ENCODE measurements at regions of chr1 and their contacts with region 1.

Region 1: DNA sequence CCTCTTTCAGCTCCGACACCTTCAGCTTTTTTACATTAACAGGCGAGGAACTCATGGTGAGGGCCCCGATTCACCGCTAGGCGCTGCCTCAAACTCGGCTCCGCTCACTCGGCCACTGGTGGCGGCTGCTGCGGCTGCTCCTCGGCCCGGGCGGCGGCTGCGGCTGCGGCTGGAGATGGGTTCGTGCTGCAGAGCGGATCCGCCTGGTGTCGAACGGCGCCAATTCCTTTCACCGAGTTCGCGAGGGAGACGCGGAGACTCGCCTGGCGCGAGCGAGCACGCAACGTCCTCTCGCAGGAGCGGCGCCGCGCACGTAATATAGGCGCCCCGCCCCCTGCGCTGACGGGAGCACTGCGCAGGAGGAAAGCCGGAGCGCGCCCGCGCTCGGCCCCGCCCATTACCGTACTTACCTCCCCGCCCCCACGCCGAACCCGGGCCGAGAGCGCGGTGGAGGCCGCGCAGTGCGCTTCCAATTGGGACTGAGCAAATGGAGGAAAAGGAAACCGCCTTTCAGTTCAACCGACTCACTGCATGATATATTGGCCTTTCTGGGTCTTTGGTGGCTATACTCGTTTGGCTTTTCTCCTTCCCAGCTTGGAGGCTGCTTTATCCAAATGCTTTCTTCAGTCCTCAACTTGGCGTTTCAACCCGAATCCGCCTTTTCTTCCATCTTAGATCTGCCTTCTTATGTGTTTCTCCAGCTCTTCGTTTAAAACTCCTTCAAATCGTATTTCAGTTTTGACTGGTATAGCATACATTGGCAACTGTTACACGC is at the start of gene HNRNPU:
- H3K4me3 ChIP-seq: peak within 1 kb of the TSS; percentile 80
- H3K27ac ChIP-seq: peak within 1 kb of the TSS; percentile 100
- H3K4me1 ChIP-seq: peaks cover 16% of the 10 kb centered on the region
- CTCF ChIP-seq: peak; percentile 61

Region 2: DNA sequence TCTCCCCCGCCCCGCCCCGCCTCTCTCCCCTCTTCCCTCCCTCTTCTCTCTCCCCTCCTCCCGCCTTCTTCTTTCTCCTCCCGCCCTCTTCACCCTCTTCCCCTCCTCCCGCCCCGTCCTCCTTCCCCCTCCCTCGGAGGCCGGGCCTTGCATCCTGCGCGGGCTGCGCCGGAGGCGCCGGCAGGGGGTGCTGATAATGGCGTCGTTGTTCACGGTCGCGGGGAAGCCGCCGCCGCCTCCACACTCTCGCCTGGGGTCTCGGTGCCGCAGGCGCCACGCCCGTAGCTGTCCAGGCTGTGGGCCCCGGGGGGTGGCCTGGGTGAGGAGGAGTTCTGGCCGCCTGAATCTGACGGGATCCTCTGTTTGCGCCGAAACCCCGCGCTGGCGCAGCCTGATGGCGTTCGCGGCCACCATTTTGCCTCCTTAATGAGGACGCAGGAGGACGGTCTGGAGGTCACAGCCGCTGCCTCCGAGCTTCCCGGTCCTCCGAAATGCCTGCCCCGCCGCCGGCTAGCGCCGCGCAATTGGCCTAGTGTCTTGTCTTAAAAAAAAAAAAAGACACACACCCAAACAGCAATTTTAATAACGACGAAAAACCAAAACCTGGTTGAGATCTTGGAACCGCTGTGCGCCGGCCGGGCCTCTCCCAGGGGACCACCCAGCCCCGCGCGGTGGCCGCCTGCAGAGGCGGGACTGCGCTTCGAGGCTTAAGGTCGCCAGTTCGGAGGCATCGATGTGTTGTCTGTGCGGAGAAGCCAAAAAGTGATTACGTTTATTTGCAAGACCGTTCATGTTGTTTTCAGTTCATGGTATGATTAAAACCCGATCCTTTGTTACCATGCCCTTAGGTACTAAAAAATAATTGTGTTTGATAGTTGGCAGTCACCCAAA is 106.5 kb after region 1 on chr1:
- CTCF ChIA-PET with region 1: interaction called, 9 read pairs
- POLR2A ChIA-PET with region 1: interaction called, 33 read pairs
- H3K4me3 ChIP-seq: peak overlapping the region; percentile 86
- H3K27ac ChIP-seq: peak overlapping the region; percentile 100
- H3K4me1 ChIP-seq: no peaks in the 10 kb centered on the region
- CTCF ChIP-seq: peak; percentile 99

Measured in HEK293 (cell line).